ENCODE measurements at regions of chr2 and their contacts with region 1.

Region 1: GRCh38 chr2:201257956-201258665 is 2.2 kb upstream of the CASP8 start:
- DNase-seq: peak; percentile 96
- H3K4me3 Mint-ChIP-seq: peak overlapping the region; percentile 81
- H3K27ac Mint-ChIP-seq: peak overlapping the region; percentile 98
- H3K4me1 Mint-ChIP-seq: peaks cover 68% of the 10 kb centered on the region
- H3K27me3 Mint-ChIP-seq: no peaks in the 10 kb centered on the region

Region 2: DNA sequence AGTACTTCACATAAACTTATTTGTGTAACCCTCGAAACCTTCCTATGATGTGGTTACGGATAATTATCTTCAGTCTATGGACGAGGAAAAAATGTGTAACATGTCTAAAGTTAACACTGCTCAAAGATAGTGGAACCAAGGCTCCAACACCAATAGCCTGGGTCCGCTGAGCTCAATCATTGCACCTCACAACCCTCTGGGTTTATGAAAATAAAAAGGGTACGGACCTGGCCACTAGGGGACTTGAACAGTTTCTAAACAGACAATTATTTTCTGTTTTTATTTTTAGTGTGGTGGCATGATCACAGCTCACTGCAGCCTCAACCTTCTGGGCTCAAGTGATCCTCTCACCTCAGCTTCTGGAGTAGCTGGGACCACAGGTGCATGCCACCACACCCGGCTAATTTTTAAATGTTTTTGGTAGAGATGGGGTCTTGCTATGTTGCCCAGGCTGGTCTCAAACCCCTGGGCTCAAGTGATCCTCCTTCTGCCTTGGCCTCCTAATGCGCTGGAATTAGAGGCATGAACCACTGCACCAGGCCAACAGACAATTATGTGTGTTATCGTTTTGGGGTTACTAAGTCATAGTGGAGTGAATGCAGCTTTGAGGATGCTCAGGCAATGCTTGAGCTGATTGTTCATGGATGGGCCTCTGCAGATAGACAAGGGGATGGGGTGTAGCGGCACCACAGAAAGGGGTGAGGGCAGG is 12.3 kb after region 1 on chr2:
- CTCF ChIA-PET with region 1: interaction called, 16 read pairs
- POLR2A ChIA-PET with region 1: interaction called, 205 read pairs
- DNase-seq: no peak
- H3K4me3 Mint-ChIP-seq: no peak overlapping the region
- H3K27ac Mint-ChIP-seq: no peak overlapping the region
- H3K4me1 Mint-ChIP-seq: peaks cover 76% of the 10 kb centered on the region
- H3K27me3 Mint-ChIP-seq: no peaks in the 10 kb centered on the region

Region 3: GRCh38 chr2:201363857-201364560 is 105.9 kb after region 1 on chr2:
- CTCF ChIA-PET with region 1: interaction called, 30 read pairs
- POLR2A ChIA-PET with region 1: interaction called, 10 read pairs
- DNase-seq: peak; percentile 21
- H3K4me3 Mint-ChIP-seq: no peak overlapping the region
- H3K27ac Mint-ChIP-seq: peak overlapping the region; percentile 71
- H3K4me1 Mint-ChIP-seq: peaks cover 32% of the 10 kb centered on the region
- H3K27me3 Mint-ChIP-seq: no peaks in the 10 kb centered on the region

Region 4: GRCh38 chr2:201451292-201452057 is 193.4 kb after region 1 on chr2 and contains the starts of genes STRADB and TRAK2:
- CTCF ChIA-PET with region 1: interaction called, 4 read pairs
- POLR2A ChIA-PET with region 1: interaction called, 30 read pairs
- DNase-seq: peak; percentile 97
- H3K4me3 Mint-ChIP-seq: peak within 1 kb of the TSS; percentile 95
- H3K27ac Mint-ChIP-seq: peak within 1 kb of the TSS; percentile 96
- H3K4me1 Mint-ChIP-seq: peaks cover 53% of the 10 kb centered on the region
- H3K27me3 Mint-ChIP-seq: no peaks in the 10 kb centered on the region
- total RNA-seq, gene STRADB: 18.9 to 19.2 TPM
- total RNA-seq, gene TRAK2: 47.3 to 49.3 TPM